A673 (cell line): ENCODE measurements at regions of chr1 and their contacts with region 1.

Region 1: GRCh38 chr1:113978863-113979702 is at the start of gene OLFML3:
- DNase-seq: peak; percentile 98
- H3K4me3 ChIP-seq: peak within 1 kb of the TSS; percentile 56
- H3K27ac ChIP-seq: peak within 1 kb of the TSS; percentile 96
- H3K4me1 ChIP-seq: peaks cover 66% of the 10 kb centered on the region
- H3K27me3 ChIP-seq: no peaks in the 10 kb centered on the region
- CTCF ChIP-seq: peak; percentile 77
- total RNA-seq, gene OLFML3: 319 and 349 TPM in 2 replicates

Region 2: DNA sequence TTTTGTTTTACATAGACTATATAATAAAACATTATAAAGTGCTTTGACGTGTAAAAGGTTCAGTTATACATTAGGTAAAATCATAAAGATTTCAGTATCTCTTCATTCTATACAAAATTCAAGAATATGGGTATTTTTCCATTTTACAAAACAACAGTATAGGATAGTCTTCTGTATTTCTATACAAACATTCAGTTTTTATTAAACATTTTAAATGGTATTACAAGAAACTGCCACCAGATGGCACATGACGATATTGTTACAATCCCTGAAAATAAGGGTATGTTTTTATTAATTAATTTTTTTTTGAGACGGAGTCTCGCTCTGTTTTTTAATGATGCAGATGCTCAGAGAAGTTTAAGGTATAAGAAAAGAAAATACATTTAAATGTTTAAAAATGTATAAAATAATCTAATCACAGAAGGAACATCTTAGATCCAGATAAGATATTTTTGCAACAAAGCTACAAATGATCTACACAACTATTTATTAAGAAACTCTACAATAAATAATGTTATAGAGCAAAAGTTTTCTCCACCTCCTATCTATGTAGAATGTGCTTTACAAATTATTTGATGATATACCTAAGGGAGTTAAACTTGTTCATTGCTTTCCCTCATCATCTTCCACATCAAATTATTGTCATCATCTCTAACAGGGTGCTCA is 143.3 kb before region 1 on chr1:
- CTCF ChIA-PET with region 1: no interaction called
- POLR2A ChIA-PET with region 1: no interaction called
- intact Hi-C with region 1: loop called (anchors 5 kb)
- DNase-seq: peak; percentile 73
- H3K4me3 ChIP-seq: no peak overlapping the region
- H3K27ac ChIP-seq: no peak overlapping the region
- H3K4me1 ChIP-seq: peaks cover 6% of the 10 kb centered on the region
- H3K27me3 ChIP-seq: no peaks in the 10 kb centered on the region
- CTCF ChIP-seq: peak; percentile 72

Region 3: GRCh38 chr1:113949007-113949406 is 30.1 kb before region 1 on chr1:
- CTCF ChIA-PET with region 1: no interaction called
- POLR2A ChIA-PET with region 1: no interaction called
- intact Hi-C with region 1: no loop called
- DNase-seq: peak; percentile 57
- H3K4me3 ChIP-seq: no peak overlapping the region
- H3K27ac ChIP-seq: peak overlapping the region; percentile 62
- H3K4me1 ChIP-seq: peaks cover 43% of the 10 kb centered on the region
- H3K27me3 ChIP-seq: no peaks in the 10 kb centered on the region
- CTCF ChIP-seq: peak; percentile 56

Region 4: GRCh38 chr1:114152508-114153260 is 173.6 kb after region 1 on chr1:
- CTCF ChIA-PET with region 1: interaction called, 4 read pairs
- POLR2A ChIA-PET with region 1: no interaction called
- intact Hi-C with region 1: loop called (anchors 2 kb)
- DNase-seq: peak; percentile 74
- H3K4me3 ChIP-seq: peak overlapping the region; percentile 82
- H3K27ac ChIP-seq: peak overlapping the region; percentile 92
- H3K4me1 ChIP-seq: peaks cover 36% of the 10 kb centered on the region
- H3K27me3 ChIP-seq: no peaks in the 10 kb centered on the region
- CTCF ChIP-seq: no peak

Region 5: DNA sequence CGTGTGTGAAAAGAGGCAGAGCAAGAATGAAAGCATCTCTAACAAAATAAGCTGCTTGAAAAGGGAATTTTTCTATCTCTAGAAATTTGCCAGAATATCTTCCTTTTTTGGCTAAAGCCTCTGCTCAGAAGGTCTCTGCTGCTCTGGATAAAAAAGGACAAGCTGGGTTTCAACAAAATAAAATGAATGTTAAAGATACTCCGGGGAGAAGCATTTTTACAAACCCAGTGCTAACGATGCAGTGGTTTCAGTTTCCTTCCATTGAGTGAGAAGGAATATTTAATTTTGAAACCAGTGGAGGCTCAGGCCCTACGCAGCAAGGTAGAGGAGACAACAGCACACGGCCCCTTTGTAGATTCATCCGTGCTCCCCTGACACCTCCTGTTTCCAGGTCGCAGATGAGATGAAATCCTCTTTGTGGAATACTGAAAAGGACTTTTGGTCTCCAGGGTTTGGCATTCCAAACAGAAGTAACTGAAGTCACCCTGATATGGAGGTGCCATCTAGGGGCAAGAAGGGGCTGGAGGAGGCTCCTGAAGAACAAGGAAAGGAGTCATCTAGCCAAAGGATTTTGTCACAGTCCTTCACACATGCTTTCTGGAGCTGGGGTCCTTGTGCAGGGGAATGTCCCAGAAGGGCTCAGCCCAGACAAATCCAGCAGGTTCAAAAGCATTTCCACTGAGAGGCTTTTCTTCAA is 240.2 kb after region 1 on chr1:
- CTCF ChIA-PET with region 1: interaction called, 3 read pairs
- POLR2A ChIA-PET with region 1: no interaction called
- intact Hi-C with region 1: loop called (anchors 2 kb)
- DNase-seq: peak; percentile 66
- H3K4me3 ChIP-seq: peak overlapping the region; percentile 5
- H3K27ac ChIP-seq: peak overlapping the region; percentile 39
- H3K4me1 ChIP-seq: peaks cover 30% of the 10 kb centered on the region
- H3K27me3 ChIP-seq: no peaks in the 10 kb centered on the region
- CTCF ChIP-seq: peak; percentile 57

Region 6: GRCh38 chr1:114299331-114299975 is 320.4 kb after region 1 on chr1:
- CTCF ChIA-PET with region 1: interaction called, 12 read pairs
- POLR2A ChIA-PET with region 1: no interaction called
- intact Hi-C with region 1: loop called (anchors 5 kb)
- DNase-seq: peak; percentile 89
- H3K4me3 ChIP-seq: no peak overlapping the region
- H3K27ac ChIP-seq: peak overlapping the region; percentile 83
- H3K4me1 ChIP-seq: peaks cover 45% of the 10 kb centered on the region
- H3K27me3 ChIP-seq: no peaks in the 10 kb centered on the region
- CTCF ChIP-seq: peak; percentile 65

Region 7: DNA sequence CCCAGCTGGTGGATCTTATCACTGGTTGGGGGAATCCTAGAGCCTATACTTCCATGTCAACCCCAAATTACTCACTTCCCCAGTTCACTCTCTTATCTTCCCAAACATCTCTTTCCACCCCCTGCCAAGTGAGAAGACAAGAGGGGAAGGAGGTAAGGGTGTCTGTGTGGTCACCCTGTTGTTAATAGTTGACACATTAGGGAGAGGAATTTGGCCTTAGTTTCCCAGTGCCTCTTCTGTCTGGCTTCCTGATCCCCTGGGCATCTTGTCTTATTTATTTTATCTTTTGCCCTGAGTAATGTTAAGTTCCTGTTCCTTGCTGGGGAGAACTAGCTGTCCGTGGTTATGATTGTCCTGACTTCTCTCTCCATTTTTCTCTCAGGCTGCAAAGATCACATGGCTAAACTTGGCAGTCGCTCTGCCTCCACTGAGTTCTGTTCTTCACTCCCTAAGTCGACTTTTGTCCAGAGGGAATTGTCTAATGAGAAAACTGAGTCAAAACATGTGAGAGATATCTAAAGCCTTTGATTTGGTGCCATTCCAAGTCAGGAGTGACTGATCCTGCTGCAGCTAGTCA is 331.7 kb after region 1 on chr1:
- CTCF ChIA-PET with region 1: no interaction called
- POLR2A ChIA-PET with region 1: no interaction called
- intact Hi-C with region 1: no loop called
- DNase-seq: no peak
- H3K4me3 ChIP-seq: no peak overlapping the region
- H3K27ac ChIP-seq: no peak overlapping the region
- H3K4me1 ChIP-seq: no peaks in the 10 kb centered on the region
- H3K27me3 ChIP-seq: no peaks in the 10 kb centered on the region
- CTCF ChIP-seq: no peak

Region 8: DNA sequence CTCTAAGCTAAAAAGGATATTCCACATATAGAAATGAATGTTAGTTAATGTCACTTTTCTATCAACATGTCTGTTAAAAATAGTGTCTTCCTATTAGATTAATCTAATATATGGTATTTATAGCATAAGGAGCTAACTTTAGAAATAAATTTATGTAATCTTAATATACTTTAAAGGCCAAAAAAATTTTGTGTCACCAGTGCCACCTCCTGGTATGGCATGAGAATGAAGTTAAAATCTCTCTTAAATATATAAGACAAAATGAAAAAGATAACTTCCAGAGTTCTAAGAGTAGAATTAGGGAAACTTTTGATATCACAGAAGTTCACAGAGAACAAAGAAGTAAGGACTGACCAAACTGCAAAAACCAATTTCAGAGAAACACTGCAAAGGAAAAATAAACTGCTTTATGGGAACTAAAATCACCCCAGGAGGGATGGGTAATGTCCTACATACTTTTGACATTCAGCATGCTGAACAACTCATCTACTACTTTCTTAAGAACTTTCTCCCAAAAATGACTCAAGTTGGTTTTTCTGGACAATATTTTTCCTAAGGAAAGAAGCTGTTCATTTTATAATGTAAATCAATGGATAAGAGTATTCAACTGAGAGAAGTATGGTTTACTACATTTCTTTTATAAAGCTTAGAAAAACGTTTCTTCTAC is 449.1 kb after region 1 on chr1:
- CTCF ChIA-PET with region 1: no interaction called
- POLR2A ChIA-PET with region 1: no interaction called
- intact Hi-C with region 1: loop called (anchors 2 kb)
- DNase-seq: peak; percentile 32
- H3K4me3 ChIP-seq: no peak overlapping the region
- H3K27ac ChIP-seq: no peak overlapping the region
- H3K4me1 ChIP-seq: peaks cover 9% of the 10 kb centered on the region
- H3K27me3 ChIP-seq: no peaks in the 10 kb centered on the region
- CTCF ChIP-seq: peak; percentile 72